ENCODE measurements at regions of chrX and their contacts with region 1.

Region 1: DNA sequence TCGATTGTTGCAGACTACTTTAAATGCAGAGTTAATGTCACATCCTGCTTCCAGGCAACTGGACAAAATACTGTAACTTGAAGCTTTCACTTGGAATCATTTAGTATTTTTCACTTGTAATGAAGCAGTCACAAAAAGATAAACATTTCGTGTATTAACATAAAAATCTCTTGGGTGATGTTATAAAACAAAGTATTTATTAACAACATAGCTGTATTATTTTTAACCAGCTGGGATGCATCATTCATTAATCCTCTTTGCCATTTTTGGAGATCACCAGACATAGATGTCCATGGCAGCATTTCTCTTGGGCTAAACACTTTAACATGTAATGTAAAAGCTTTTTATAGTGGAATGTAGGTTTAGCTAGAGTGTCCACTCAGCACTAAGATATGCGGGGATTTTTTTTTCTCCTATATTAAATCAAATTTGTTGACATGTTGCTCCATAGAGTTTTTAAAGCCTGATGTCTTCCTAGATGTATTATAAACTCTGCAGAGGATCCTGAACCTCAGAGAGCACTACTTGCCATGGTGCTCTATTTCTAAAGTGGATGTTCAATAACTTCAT is 193.7 kb upstream of the SPANXN4 start:
- DNase-seq: no peak
- ATAC-seq: no peak
- H3K4me3 ChIP-seq: no peak overlapping the region
- H3K4me3 Mint-ChIP-seq: no peak overlapping the region
- H3K27ac ChIP-seq: no peak overlapping the region
- H3K27ac Mint-ChIP-seq: no peak overlapping the region
- H3K4me1 ChIP-seq: no peaks in the 10 kb centered on the region
- H3K4me1 Mint-ChIP-seq: no peaks in the 10 kb centered on the region
- H3K27me3 ChIP-seq: no peaks in the 10 kb centered on the region
- H3K27me3 Mint-ChIP-seq: peaks cover 0 to 17% of the 10 kb centered on the region in 2 donors

Region 2: GRCh38 chrX:142156567-142156966 is 675.5 kb before region 1 on chrX:
- CTCF ChIA-PET with region 1: no interaction called
- POLR2A ChIA-PET with region 1: interaction called in 1 of 2 experiments, 11 read pairs
- DNase-seq: no peak
- ATAC-seq: no peak
- H3K4me3 ChIP-seq: no peak overlapping the region
- H3K4me3 Mint-ChIP-seq: no peak overlapping the region
- H3K27ac ChIP-seq: no peak overlapping the region
- H3K27ac Mint-ChIP-seq: no peak overlapping the region
- H3K4me1 ChIP-seq: no peaks in the 10 kb centered on the region
- H3K4me1 Mint-ChIP-seq: no peaks in the 10 kb centered on the region
- H3K27me3 ChIP-seq: no peaks in the 10 kb centered on the region
- H3K27me3 Mint-ChIP-seq: peaks cover 0 to 3% of the 10 kb centered on the region in 2 donors

Region 3: GRCh38 chrX:142702749-142703148 is 129.3 kb before region 1 on chrX:
- CTCF ChIA-PET with region 1: no interaction called
- POLR2A ChIA-PET with region 1: no interaction called
- DNase-seq: no peak
- ATAC-seq: no peak
- H3K4me3 ChIP-seq: no peak overlapping the region
- H3K4me3 Mint-ChIP-seq: no peak overlapping the region
- H3K27ac ChIP-seq: no peak overlapping the region
- H3K27ac Mint-ChIP-seq: no peak overlapping the region
- H3K4me1 ChIP-seq: no peaks in the 10 kb centered on the region
- H3K4me1 Mint-ChIP-seq: no peaks in the 10 kb centered on the region
- H3K27me3 ChIP-seq: no peaks in the 10 kb centered on the region
- H3K27me3 Mint-ChIP-seq: peaks cover 0 to 5% of the 10 kb centered on the region in 2 donors

Region 4: GRCh38 chrX:142819461-142819860 is 12.6 kb before region 1 on chrX:
- CTCF ChIA-PET with region 1: no interaction called
- POLR2A ChIA-PET with region 1: no interaction called
- DNase-seq: no peak
- ATAC-seq: no peak
- H3K4me3 ChIP-seq: no peak overlapping the region
- H3K4me3 Mint-ChIP-seq: no peak overlapping the region
- H3K27ac ChIP-seq: no peak overlapping the region
- H3K27ac Mint-ChIP-seq: no peak overlapping the region
- H3K4me1 ChIP-seq: no peaks in the 10 kb centered on the region
- H3K4me1 Mint-ChIP-seq: no peaks in the 10 kb centered on the region
- H3K27me3 ChIP-seq: no peaks in the 10 kb centered on the region
- H3K27me3 Mint-ChIP-seq: peaks cover 0 to 3% of the 10 kb centered on the region in 2 donors

Region 5: DNA sequence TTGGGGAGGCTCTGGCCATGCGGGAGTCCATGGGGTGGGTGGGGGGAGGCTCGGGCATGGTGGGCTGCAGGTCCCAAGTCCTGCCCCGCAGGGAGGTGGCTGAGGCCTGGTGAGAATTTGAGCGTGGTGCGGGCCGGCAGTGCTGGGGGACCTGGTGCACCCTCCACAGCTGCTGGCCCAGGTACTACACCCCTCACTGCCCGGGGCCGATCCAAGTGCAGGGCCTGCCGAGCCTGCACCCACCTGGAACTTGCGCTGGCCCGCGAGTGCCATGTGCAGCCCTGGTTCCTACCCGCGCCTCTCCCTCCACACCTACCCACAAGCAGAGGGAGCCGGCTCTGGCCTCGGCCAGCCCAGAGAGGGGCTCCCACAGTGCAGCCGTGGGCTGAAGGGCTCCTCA is 894.2 kb after region 1 on chrX:
- CTCF ChIA-PET with region 1: no interaction called
- POLR2A ChIA-PET with region 1: no interaction called
- DNase-seq: no peak
- ATAC-seq: no peak
- H3K4me3 ChIP-seq: no peak overlapping the region
- H3K4me3 Mint-ChIP-seq: no peak overlapping the region
- H3K27ac ChIP-seq: no peak overlapping the region
- H3K27ac Mint-ChIP-seq: no peak overlapping the region
- H3K4me1 ChIP-seq: no peaks in the 10 kb centered on the region
- H3K4me1 Mint-ChIP-seq: no peaks in the 10 kb centered on the region
- H3K27me3 ChIP-seq: no peaks in the 10 kb centered on the region
- H3K27me3 Mint-ChIP-seq: no peaks in the 10 kb centered on the region

Region 6: GRCh38 chrX:144006811-144007210 is 1174.8 kb after region 1 on chrX:
- CTCF ChIA-PET with region 1: no interaction called
- POLR2A ChIA-PET with region 1: no interaction called
- DNase-seq: no peak
- ATAC-seq: no peak
- H3K4me3 ChIP-seq: no peak overlapping the region
- H3K4me3 Mint-ChIP-seq: no peak overlapping the region
- H3K27ac ChIP-seq: no peak overlapping the region
- H3K27ac Mint-ChIP-seq: no peak overlapping the region
- H3K4me1 ChIP-seq: no peaks in the 10 kb centered on the region
- H3K4me1 Mint-ChIP-seq: no peaks in the 10 kb centered on the region
- H3K27me3 ChIP-seq: no peaks in the 10 kb centered on the region
- H3K27me3 Mint-ChIP-seq: peaks cover 0 to 4% of the 10 kb centered on the region in 2 donors